Tibial artery (tissue), 4 donors: ENCODE measurements at regions of chr9 and their contacts with region 1.

Region 1: GRCh38 chr9:120842690-120843499 is at the start of gene PSMD5:
- DNase-seq: peak; percentile 99 to 100
- H3K4me3 ChIP-seq: peak within 1 kb of the TSS; percentile 72 to 84
- H3K27ac ChIP-seq: peak within 1 kb of the TSS; percentile 96 to 97
- H3K4me1 ChIP-seq: peaks cover 0 to 43% (median 16%) of the 10 kb centered on the region in 4 donors
- H3K27me3 ChIP-seq: no peaks in the 10 kb centered on the region
- CTCF ChIP-seq: peak in 1 of 2 experiments; percentile 3

Region 2: DNA sequence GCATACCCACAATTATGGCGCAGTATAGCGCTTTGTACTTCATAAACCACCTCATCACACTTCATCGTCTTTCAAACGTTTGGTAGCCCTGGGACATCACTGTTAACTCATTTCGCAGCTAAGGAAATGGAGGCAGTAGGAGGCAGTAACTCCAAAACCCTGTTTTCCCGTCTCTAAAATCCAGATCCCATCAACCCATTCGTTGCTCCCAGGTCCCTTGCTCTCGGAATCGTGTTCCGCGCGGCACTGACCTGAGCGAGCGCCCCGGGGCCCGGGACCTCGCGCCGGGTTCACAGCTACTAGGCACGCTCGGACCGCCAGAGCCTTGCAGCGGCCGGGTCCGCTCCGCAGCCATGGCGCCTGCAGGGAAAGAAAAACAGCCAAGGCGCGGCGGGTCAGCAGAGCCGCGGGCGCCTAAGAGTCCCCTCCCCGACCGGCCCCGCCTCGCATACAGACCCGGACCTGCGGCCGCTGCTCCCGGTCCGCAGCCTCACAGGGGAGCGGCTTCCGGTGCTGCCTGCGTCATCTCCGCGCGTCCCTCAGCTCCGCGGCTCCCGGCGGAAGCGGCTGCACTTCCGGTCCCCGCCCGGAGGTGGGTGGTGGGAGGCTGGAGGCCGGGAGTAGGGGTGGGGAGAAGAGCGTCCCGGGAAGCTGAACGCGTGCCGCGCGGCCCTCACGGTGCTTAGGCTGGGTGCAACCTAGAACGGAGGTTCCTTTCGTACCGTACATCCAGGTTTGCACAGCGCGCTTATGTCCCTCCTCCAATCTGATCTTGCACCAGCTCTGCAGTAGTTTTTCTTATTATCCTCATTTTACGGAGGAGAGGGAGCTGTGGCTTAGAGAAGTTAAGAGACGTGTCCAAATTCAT is 49.8 kb before region 1 on chr9 and contains the start of gene FBXW2:
- intact Hi-C with region 1: loop called (anchors 5 kb)
- DNase-seq: peak; percentile 86 to 94
- H3K4me3 ChIP-seq: peak within 1 kb of the TSS; percentile 70 to 90
- H3K27ac ChIP-seq: peak within 1 kb of the TSS; percentile 76 to 90
- H3K4me1 ChIP-seq: peaks cover 0 to 45% (median 22%) of the 10 kb centered on the region in 4 donors
- H3K27me3 ChIP-seq: no peaks in the 10 kb centered on the region
- CTCF ChIP-seq: peak in 1 of 2 experiments; percentile 43

Region 3: GRCh38 chr9:120985810-120986222 is 142.9 kb after region 1 on chr9:
- intact Hi-C with region 1: no loop called
- DNase-seq: no peak
- H3K4me3 ChIP-seq: no peak overlapping the region
- H3K27ac ChIP-seq: no peak overlapping the region
- H3K4me1 ChIP-seq: no peaks in the 10 kb centered on the region
- H3K27me3 ChIP-seq: no peaks in the 10 kb centered on the region
- CTCF ChIP-seq: peak; percentile 46 to 59